OCI-LY7 (cell line): ENCODE measurements at regions of chr5 and their contacts with region 1.

Region 1: DNA sequence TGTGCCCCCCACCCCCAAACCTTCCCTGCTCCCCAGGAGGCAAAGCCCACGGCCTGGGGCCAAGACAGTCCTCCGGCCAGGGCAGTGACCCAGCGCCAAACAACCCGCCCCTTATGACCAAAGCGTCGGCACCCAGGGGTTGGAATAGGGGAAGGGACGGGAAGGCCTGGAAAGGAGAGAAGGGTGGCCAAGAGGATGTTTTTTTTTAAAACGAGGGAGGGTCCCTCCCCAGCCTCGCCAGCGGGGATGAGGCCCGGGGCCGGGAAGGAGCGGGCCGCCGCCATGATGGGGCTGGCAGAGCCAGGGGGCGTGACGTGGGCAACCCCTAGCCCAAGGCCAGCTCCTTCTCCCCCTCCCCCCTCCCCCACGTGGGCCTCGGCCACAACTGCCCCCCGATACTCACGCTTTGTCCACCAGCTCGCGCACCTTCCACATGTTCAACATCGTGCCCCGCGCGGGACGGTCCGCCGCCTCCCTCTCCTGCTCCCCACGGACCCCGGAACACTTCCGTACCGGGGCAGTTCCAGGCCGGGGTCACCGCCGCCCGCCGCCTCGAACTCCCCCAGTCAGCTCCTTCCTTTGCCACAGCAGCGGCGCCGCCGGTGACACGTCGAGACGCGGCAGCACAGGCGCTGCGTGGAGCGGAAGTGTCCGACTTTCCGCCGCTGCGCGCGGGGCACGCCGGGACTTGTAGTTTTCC is at the start of gene CLINT1:
- DNase-seq: peak; percentile 94
- H3K4me3 ChIP-seq: peak within 1 kb of the TSS; percentile 96
- H3K27ac ChIP-seq: peak within 1 kb of the TSS; percentile 97
- H3K4me1 ChIP-seq: peaks cover 81% of the 10 kb centered on the region
- CTCF ChIP-seq: no peak
- total RNA-seq, gene CLINT1: 86.1 and 107 TPM in 2 replicates

Region 2: GRCh38 chr5:157820593-157821252 is 38.0 kb before region 1 on chr5:
- CTCF ChIA-PET with region 1: interaction called, 4 read pairs
- POLR2A ChIA-PET with region 1: interaction called, 11 read pairs
- intact Hi-C with region 1: loop called (anchors 2 kb)
- DNase-seq: peak; percentile 83
- H3K4me3 ChIP-seq: peak overlapping the region; percentile 3
- H3K27ac ChIP-seq: peak overlapping the region; percentile 68
- H3K4me1 ChIP-seq: peaks cover 79% of the 10 kb centered on the region
- CTCF ChIP-seq: peak; percentile 97

Region 3: DNA sequence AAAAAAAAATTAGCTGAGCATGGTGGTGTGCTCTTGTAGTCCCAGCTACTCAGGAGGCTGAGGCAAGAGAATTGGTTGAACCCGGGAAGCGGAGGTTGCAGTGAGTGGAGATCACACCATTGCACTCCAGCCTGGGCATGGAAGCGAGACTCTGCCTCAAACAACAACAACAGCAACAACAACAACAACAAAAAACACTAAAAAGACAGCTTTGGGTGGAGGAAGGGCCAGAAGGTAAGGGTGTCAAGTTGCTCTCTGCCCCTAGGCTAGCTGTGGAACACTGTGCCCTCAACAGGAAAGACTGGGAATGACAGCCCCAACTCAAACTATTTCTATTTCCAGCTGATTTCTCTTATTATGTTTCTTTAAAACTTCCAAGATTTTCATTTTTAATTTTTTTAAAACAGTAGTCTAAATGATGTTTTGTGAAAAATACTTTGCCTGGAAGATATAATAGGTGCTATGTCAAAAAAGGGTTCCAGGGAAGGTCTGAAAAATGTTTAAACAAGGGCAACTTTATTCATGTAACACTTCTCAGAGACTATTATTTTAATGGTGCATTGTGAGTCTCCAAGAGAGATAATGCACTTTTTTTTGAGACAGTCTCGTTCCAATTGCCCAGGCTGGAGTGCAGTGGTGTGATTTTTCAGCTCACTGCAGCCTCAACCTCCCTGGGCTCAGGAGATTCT is 29.6 kb before region 1 on chr5:
- CTCF ChIA-PET with region 1: interaction called, 4 read pairs
- POLR2A ChIA-PET with region 1: interaction called, 34 read pairs
- intact Hi-C with region 1: loop called (anchors 1 kb)
- DNase-seq: no peak
- H3K4me3 ChIP-seq: peak overlapping the region; percentile 47
- H3K27ac ChIP-seq: peak overlapping the region; percentile 96
- H3K4me1 ChIP-seq: peaks cover 99% of the 10 kb centered on the region
- CTCF ChIP-seq: peak; percentile 50

Region 4: GRCh38 chr5:157900644-157901043 is 42.0 kb after region 1 on chr5:
- CTCF ChIA-PET with region 1: no interaction called
- POLR2A ChIA-PET with region 1: interaction called, 21 read pairs
- intact Hi-C with region 1: loop called (anchors 1 kb)
- DNase-seq: peak; percentile 95
- H3K4me3 ChIP-seq: no peak overlapping the region
- H3K27ac ChIP-seq: peak overlapping the region; percentile 82
- H3K4me1 ChIP-seq: peaks cover 26% of the 10 kb centered on the region
- CTCF ChIP-seq: no peak

Region 5: DNA sequence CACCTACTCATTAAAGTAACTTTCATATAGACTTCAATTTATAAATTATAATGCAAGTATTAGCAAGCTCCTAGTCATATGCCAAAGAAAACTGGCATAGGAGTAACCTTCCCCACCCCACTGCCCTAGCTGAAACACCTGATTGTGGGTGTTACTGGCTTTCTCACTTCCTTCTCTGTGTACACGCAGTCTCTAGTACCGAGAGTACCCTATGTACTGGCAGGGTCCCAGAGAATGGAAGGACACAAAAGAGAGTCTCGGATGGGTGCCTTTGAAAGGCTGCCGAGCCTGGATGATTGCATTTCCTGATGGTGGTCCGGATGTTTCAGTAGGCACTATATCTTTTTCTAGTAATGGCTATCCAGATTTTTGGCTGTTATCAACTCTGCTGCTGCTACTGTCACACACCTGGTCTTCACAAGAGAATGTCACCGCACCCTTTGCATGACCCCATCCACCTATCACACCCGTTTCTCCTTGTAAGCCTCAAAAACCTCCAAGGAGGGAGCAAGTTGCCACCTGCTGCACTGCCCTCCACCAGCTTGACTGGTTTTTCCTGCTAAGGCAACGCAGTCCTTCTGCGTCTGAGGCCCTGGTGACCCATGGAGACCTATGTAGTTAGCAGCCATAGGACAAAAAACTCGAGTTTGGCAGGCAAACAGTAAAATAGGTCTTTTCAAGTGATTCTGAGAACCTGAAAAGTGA is 54.1 kb after region 1 on chr5:
- CTCF ChIA-PET with region 1: interaction called, 4 read pairs
- POLR2A ChIA-PET with region 1: interaction called, 6 read pairs
- intact Hi-C with region 1: loop called (anchors 1 kb)
- DNase-seq: peak; percentile 95
- H3K4me3 ChIP-seq: peak overlapping the region; percentile 49
- H3K27ac ChIP-seq: peak overlapping the region; percentile 95
- H3K4me1 ChIP-seq: peaks cover 83% of the 10 kb centered on the region
- CTCF ChIP-seq: no peak

Region 6: DNA sequence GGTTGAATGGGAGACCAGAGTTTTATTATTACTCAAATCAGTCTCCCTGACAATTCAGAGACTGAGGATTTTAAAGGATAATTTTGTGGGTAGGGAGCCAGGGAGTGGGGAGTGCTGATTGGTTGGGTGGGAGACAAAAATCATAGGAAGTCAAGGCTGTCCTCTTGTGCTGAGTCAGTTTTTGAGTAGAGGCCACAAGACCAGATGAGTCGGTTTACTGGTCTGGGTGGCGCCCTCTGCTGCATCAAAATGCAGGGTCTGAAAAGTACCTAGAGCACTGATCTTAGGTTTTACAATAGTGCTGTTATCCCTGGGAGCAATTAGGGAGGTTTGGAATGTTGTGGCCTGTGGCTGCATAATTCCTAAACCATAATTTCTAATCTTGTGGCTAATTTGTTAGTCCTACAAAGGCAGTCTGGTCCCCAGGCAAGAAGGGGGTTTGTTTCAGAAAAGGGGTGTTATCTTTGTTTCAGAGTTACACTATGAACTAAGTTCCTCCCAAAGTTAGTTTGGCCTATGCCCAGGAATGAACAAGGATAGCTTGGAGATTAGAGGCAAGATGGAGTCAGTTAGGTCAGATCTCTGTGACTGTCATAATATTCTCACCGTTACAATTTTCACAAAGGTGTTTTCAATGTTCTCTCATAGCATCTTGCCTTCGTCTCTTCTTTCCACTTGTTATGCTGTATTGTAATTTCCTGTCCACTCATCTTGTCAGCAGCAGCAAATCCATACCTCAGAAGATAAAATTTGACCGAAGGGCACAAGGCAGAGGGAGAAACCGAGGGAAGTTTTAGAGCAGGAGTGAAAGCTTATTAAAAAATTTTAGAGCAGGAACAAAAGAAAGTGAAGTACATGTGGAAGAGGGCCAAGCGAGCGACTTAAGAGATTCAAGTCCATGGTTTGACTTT is 59.5 kb after region 1 on chr5:
- CTCF ChIA-PET with region 1: interaction called, 4 read pairs
- POLR2A ChIA-PET with region 1: interaction called, 5 read pairs
- intact Hi-C with region 1: loop called (anchors 1 kb)
- DNase-seq: peak; percentile 84
- H3K4me3 ChIP-seq: no peak overlapping the region
- H3K27ac ChIP-seq: peak overlapping the region; percentile 31
- H3K4me1 ChIP-seq: peaks cover 70% of the 10 kb centered on the region
- CTCF ChIP-seq: peak; percentile 90

Region 7: GRCh38 chr5:157948738-157949410 is 90.2 kb after region 1 on chr5:
- CTCF ChIA-PET with region 1: interaction called, 4 read pairs
- POLR2A ChIA-PET with region 1: interaction called, 3 read pairs
- intact Hi-C with region 1: loop called (anchors 1 kb)
- DNase-seq: peak; percentile 93
- H3K4me3 ChIP-seq: peak overlapping the region; percentile 17
- H3K27ac ChIP-seq: no peak overlapping the region
- H3K4me1 ChIP-seq: peaks cover 19% of the 10 kb centered on the region
- CTCF ChIP-seq: peak; percentile 97